CD4-positive, alpha-beta memory T cell (primary cell): ENCODE measurements at regions of chr20 and their contacts with region 1.

Region 1: GRCh38 chr20:53578492-53579222 is 15.0 kb downstream of the ZNF217 start:
- DNase-seq: peak; percentile 78 to 83 (median 83)
- H3K4me3 ChIP-seq: peak overlapping the region; percentile 45 to 79
- H3K4me3 Mint-ChIP-seq: peak overlapping the region; percentile 85 to 95 (median 90)
- H3K27ac ChIP-seq: peak overlapping the region; percentile 68
- H3K27ac Mint-ChIP-seq: peak overlapping the region; percentile 94 to 100 (median 95)
- H3K4me1 ChIP-seq: peaks cover 97% of the 10 kb centered on the region
- H3K4me1 Mint-ChIP-seq: peaks cover 57 to 95% (median 75%) of the 10 kb centered on the region in 4 donors
- H3K27me3 ChIP-seq: no peaks in the 10 kb centered on the region
- H3K27me3 Mint-ChIP-seq: no peaks in the 10 kb centered on the region

Region 2: DNA sequence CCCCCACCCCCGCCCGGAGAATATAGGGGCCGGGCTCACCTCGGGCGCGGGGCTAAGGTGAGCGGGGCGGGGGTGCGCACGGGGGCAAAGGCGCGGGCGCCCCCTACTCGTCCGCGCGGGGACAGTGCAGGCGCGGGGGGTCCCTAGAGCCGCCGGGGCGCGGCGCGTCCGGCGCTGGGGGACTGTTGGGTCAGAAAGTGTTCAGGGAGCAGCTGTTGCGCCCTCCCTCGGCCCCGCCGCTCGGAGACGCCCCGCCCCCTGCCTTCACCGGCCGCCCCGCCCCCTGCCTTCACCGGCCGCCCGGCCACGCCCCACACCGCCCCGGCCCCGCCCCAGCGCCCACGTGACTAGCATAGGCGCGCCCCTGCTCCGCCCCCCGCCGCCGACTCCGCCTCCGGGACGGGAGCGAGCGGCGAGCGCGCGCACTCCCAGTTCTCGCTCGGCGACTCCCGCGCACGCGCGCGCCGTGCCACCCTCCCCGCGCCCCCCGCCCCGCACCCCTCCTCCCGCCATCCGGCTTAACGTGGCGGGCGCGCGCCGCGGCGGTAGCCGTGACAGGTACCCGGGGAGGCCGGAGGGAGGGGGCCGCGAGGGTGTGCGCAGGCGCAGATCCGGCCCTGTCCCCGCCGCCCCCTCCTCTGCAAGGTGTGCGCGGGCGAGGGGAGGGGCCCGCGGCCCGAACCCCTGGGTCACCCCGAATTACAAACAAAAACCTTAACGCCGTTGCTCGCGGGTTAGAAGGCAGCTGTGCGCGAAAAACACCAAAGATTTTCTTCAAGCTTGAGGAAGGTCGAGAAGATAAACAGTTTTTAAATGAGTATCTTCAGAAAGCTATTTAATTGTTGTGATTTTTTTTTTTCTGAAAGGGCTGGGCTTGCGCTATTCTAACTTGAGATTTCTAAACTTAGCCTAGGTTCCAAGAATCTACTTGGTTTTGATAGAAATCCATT is 15.7 kb after region 1 on chr20:
- CTCF ChIA-PET with region 1: interaction called, 10 read pairs
- POLR2A ChIA-PET with region 1: interaction called, 106 read pairs
- intact Hi-C with region 1: loop called (anchors 1 kb)
- DNase-seq: peak; percentile 92 to 99 (median 96)
- H3K4me3 ChIP-seq: peak overlapping the region in 1 of 2 donors; percentile 79
- H3K4me3 Mint-ChIP-seq: peak overlapping the region; percentile 84 to 97 (median 90)
- H3K27ac ChIP-seq: peak overlapping the region; percentile 86
- H3K27ac Mint-ChIP-seq: peak overlapping the region; percentile 95 to 100 (median 97)
- H3K4me1 ChIP-seq: peaks cover 52% of the 10 kb centered on the region
- H3K4me1 Mint-ChIP-seq: peaks cover 41 to 74% (median 51%) of the 10 kb centered on the region in 4 donors
- H3K27me3 ChIP-seq: no peaks in the 10 kb centered on the region
- H3K27me3 Mint-ChIP-seq: no peaks in the 10 kb centered on the region

Region 3: GRCh38 chr20:53643031-53643832 is 64.6 kb after region 1 on chr20:
- CTCF ChIA-PET with region 1: interaction called, 14 read pairs
- POLR2A ChIA-PET with region 1: interaction called, 41 read pairs
- intact Hi-C with region 1: loop called (anchors 2 kb)
- DNase-seq: peak; percentile 67 to 84 (median 73)
- H3K4me3 ChIP-seq: peak overlapping the region; percentile 19 to 26
- H3K4me3 Mint-ChIP-seq: peak overlapping the region; percentile 75 to 93 (median 86)
- H3K27ac ChIP-seq: peak overlapping the region; percentile 59
- H3K27ac Mint-ChIP-seq: peak overlapping the region; percentile 94 to 99 (median 98)
- H3K4me1 ChIP-seq: peaks cover 37% of the 10 kb centered on the region
- H3K4me1 Mint-ChIP-seq: peaks cover 14 to 52% (median 37%) of the 10 kb centered on the region in 4 donors
- H3K27me3 ChIP-seq: no peaks in the 10 kb centered on the region
- H3K27me3 Mint-ChIP-seq: no peaks in the 10 kb centered on the region

Region 4: DNA sequence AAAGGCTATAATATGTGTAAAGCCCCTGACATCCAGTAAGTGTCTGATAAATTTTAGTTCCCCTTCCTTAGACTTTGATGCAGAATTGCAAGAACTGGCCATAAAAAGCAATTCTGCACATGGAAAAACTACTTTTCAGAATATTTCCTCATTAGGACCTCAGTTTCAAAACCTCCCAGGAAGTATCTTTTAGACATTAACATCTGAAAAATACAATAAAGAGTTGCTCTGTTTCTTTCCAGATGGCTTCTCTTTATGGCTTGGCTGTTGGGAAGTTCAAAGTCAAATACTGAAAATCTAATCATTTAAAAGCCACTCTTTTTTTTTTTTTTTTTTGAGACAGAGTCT is 121.3 kb after region 1 on chr20:
- CTCF ChIA-PET with region 1: interaction called, 8 read pairs
- POLR2A ChIA-PET with region 1: interaction called, 3 read pairs
- intact Hi-C with region 1: loop called (anchors 1 kb)
- DNase-seq: no peak
- H3K4me3 ChIP-seq: no peak overlapping the region
- H3K4me3 Mint-ChIP-seq: no peak overlapping the region
- H3K27ac ChIP-seq: no peak overlapping the region
- H3K27ac Mint-ChIP-seq: no peak overlapping the region
- H3K4me1 ChIP-seq: peaks cover 9% of the 10 kb centered on the region
- H3K4me1 Mint-ChIP-seq: peaks cover 8 to 11% (median 10%) of the 10 kb centered on the region in 4 donors
- H3K27me3 ChIP-seq: no peaks in the 10 kb centered on the region
- H3K27me3 Mint-ChIP-seq: no peaks in the 10 kb centered on the region

Region 5: GRCh38 chr20:53839423-53840176 is 260.9 kb after region 1 on chr20:
- CTCF ChIA-PET with region 1: interaction called, 4 read pairs
- POLR2A ChIA-PET with region 1: interaction called, 15 read pairs
- intact Hi-C with region 1: no loop called
- DNase-seq: peak; percentile 70 to 80 (median 77)
- H3K4me3 ChIP-seq: no peak overlapping the region
- H3K4me3 Mint-ChIP-seq: peak overlapping the region; percentile 33 to 98 (median 82)
- H3K27ac ChIP-seq: peak overlapping the region; percentile 44
- H3K27ac Mint-ChIP-seq: peak overlapping the region; percentile 75 to 100 (median 99)
- H3K4me1 ChIP-seq: peaks cover 89% of the 10 kb centered on the region
- H3K4me1 Mint-ChIP-seq: peaks cover 45 to 82% (median 64%) of the 10 kb centered on the region in 4 donors
- H3K27me3 ChIP-seq: no peaks in the 10 kb centered on the region
- H3K27me3 Mint-ChIP-seq: no peaks in the 10 kb centered on the region

Region 6: GRCh38 chr20:53915446-53916172 is 337.0 kb after region 1 on chr20:
- CTCF ChIA-PET with region 1: interaction called, 118 read pairs
- POLR2A ChIA-PET with region 1: interaction called, 55 read pairs
- intact Hi-C with region 1: loop called (anchors 1 kb)
- DNase-seq: peak; percentile 85 to 96 (median 88)
- H3K4me3 ChIP-seq: peak overlapping the region; percentile 91 to 94
- H3K4me3 Mint-ChIP-seq: peak overlapping the region; percentile 91 to 98 (median 96)
- H3K27ac ChIP-seq: peak overlapping the region; percentile 51
- H3K27ac Mint-ChIP-seq: peak overlapping the region; percentile 83 to 98 (median 92)
- H3K4me1 ChIP-seq: peaks cover 15% of the 10 kb centered on the region
- H3K4me1 Mint-ChIP-seq: peaks cover 11 to 22% (median 17%) of the 10 kb centered on the region in 4 donors
- H3K27me3 ChIP-seq: no peaks in the 10 kb centered on the region
- H3K27me3 Mint-ChIP-seq: no peaks in the 10 kb centered on the region

Region 7: GRCh38 chr20:54062812-54063280 is 484.2 kb after region 1 on chr20:
- CTCF ChIA-PET with region 1: no interaction called
- POLR2A ChIA-PET with region 1: no interaction called
- intact Hi-C with region 1: loop called (anchors 1 kb)
- DNase-seq: peak in 4 of 5 donors; percentile 12 to 32 (median 20)
- H3K4me3 ChIP-seq: no peak overlapping the region
- H3K4me3 Mint-ChIP-seq: no peak overlapping the region
- H3K27ac ChIP-seq: no peak overlapping the region
- H3K27ac Mint-ChIP-seq: peak overlapping the region in 1 of 7 donors; percentile 38
- H3K4me1 ChIP-seq: no peaks in the 10 kb centered on the region
- H3K4me1 Mint-ChIP-seq: peaks cover 0 to 10% (median 2%) of the 10 kb centered on the region in 4 donors
- H3K27me3 ChIP-seq: no peaks in the 10 kb centered on the region
- H3K27me3 Mint-ChIP-seq: peaks cover 0 to 2% of the 10 kb centered on the region in 2 donors